A673 (cell line): ENCODE measurements at regions of chr20 and their contacts with region 1.

Region 1: DNA sequence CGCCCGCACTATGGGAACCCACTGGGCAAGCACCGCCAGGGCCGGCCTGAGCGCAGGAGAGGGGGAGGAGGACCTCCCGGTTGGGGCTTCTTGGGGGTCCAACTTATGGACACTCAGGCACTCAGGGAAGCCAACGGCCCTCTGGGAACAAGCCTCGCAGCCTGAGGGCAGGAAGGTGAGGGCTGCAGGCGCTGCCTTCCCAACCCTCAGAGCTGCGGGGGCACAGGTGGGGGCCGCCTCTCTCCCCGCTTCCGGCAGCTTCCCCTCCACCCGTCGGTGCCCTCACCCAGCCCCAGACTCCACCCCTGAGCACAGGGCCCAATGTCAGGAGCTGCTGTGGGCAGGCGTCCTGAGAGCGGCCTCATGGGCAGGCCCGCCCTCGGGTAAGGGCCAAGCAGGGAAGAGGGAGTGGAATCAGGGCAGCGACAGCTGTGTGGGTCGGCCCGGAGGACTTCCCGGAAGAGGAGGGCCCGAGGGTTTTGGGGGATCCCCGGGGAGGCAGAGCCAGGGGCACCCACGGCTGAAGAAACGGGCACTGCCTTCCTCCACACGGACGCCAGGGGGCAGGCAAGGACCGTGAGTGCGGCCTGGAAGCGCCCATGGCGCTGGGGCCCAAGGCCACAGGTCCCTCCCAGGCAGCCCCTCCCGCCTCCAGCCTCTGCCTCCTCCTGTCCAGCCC is 488 bp upstream of the PTK6 start:
- DNase-seq: peak; percentile 85
- H3K4me3 ChIP-seq: peak overlapping the region; percentile 18
- H3K27ac ChIP-seq: no peak overlapping the region
- H3K4me1 ChIP-seq: peaks cover 5% of the 10 kb centered on the region
- H3K27me3 ChIP-seq: no peaks in the 10 kb centered on the region
- CTCF ChIP-seq: peak; percentile 93

Region 2: GRCh38 chr20:63785691-63786131 is 248.0 kb after region 1 on chr20:
- CTCF ChIA-PET with region 1: no interaction called
- POLR2A ChIA-PET with region 1: no interaction called
- intact Hi-C with region 1: loop called (anchors 5 kb)
- DNase-seq: no peak
- H3K4me3 ChIP-seq: no peak overlapping the region
- H3K27ac ChIP-seq: no peak overlapping the region
- H3K4me1 ChIP-seq: no peaks in the 10 kb centered on the region
- H3K27me3 ChIP-seq: no peaks in the 10 kb centered on the region
- CTCF ChIP-seq: no peak

Region 3: GRCh38 chr20:63979560-63980316 is 442.1 kb after region 1 on chr20 and contains the start of gene SAMD10:
- CTCF ChIA-PET with region 1: no interaction called
- POLR2A ChIA-PET with region 1: no interaction called
- intact Hi-C with region 1: loop called (anchors 5 kb)
- DNase-seq: peak; percentile 87
- H3K4me3 ChIP-seq: peak within 1 kb of the TSS; percentile 100
- H3K27ac ChIP-seq: peak within 1 kb of the TSS; percentile 94
- H3K4me1 ChIP-seq: peaks cover 23% of the 10 kb centered on the region
- H3K27me3 ChIP-seq: no peaks in the 10 kb centered on the region
- CTCF ChIP-seq: no peak
- total RNA-seq, gene SAMD10: 6.3 and 7.2 TPM in 2 replicates

Region 4: DNA sequence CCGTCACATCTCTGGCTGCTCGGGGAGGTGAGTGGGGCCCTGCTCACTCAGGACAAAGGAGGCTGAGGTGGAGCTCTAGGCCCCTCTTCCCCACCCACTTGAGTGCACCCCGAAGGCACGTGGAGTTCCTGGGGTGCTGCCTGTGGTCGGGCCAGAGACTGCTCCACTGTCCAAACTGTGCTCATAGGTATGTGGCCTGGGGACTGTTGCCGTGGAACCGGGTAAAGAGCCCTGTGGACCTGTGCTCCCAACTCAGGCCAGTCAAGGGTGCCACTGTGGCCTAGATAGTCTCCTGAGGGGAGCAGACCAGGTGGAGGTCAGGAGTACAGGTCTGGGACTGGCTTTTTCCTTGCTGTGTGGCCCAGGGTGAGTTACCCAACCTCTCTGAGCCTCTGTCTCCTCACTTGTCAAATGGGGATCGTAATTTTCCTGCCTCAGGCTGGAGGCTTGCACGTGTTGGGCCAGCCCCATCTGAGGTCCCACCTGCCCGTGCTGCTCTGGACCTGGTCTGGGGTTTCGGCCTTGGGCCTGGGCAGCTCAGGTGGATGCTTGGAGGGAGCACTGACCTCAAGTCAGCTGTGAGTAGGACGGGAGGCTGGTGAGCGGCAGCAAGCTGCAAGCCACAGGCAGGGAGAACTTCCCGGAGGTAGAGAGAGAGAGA is 582.1 kb after region 1 on chr20:
- CTCF ChIA-PET with region 1: no interaction called
- POLR2A ChIA-PET with region 1: no interaction called
- intact Hi-C with region 1: loop called (anchors 5 kb)
- DNase-seq: no peak
- H3K4me3 ChIP-seq: no peak overlapping the region
- H3K27ac ChIP-seq: no peak overlapping the region
- H3K4me1 ChIP-seq: no peaks in the 10 kb centered on the region
- H3K27me3 ChIP-seq: peaks cover 37% of the 10 kb centered on the region
- CTCF ChIP-seq: no peak